Activated CD4-positive, alpha-beta memory T cell treated with anti-CD3 and anti-CD28 coated beads for 36 hours (primary cell): ENCODE measurements at regions of chr4 and their contacts with region 1.

Region 1: DNA sequence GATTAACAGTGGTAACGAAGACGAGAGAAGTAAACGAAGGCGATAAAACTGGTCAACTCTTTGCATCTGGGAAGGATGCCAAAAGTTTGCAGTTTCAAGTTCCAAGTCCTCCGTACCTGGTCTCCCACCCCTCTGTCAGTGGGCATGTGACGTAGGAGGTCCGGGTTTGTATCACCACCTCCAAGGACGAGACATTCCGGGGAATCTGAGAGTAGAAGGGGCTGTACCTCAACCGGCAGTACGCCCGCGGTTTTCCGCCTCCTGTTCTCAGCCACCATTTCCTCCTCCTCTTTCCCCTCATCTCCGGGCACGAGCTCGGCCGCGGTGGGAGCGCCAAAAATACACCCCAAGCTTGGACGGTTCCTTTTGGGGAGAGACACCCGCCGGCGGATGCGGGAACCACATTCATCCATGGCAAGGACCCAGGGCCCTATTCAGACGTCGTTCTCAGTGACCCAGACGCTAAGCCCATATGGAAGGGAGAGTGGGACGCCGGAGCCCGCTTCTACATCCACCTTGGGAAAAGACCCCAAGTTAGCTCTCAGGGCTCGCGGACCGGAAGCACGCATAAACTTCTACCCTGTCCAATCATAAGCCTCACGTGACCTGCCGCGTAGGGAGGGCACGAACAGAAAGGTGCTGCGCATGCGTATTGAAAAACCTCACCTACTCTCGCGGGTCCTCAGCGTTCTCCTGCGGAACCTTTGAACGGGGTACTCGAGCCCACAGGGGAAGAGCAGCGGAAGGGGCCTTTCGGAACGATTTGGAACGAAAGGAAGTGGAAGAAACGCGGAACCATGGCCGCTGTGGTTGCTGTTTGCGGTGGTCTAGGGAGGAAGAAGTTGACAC is at the starts of genes HELQ and MRPS18C:
- DNase-seq: peak; percentile 98
- H3K4me3 Mint-ChIP-seq: peak within 1 kb of the TSS; percentile 100
- H3K27ac Mint-ChIP-seq: peak within 1 kb of the TSS; percentile 100
- H3K4me1 Mint-ChIP-seq: peaks cover 44% of the 10 kb centered on the region
- H3K27me3 Mint-ChIP-seq: peaks cover 2% of the 10 kb centered on the region
- total RNA-seq, gene HELQ: 9.5 to 13.3 TPM
- total RNA-seq, gene MRPS18C: 63.3 to 72.8 TPM

Region 2: DNA sequence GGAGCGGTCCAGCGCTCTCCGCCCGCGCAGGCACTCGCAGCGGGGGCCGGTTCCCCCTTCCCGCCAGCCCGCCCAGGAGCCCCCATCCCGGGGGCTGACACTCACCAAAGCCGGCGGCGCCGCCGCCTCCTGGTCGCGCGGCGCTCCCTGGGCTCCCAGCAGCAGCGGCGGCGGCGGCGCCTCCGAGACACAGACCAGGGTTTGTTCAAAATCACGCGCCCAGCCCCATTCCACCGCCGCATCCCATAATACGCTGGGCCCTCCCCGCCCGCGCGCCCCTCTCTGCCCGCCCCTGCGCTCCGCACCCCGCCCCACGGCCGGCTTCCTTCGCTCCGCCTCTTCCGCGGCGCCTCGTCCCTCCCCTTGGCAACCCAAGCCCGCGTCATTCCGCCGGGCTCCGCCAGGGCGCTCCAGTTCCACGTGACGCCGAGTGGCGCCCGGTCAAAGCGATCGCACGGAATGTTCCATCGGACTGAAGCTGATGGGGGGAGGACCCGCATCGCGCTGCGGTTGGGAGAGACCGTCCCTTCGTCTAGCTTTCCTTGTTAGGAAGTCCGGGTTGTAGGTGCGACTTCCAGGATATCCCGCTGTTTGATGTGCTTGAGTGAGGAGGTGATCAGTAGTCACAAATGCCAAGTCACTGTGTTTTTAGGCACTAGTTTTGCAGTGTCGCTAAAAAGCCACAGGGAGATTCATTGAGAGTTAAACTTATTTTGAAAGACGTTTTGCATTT is 442.7 kb before region 1 on chr4:
- CTCF ChIA-PET with region 1: no interaction called
- POLR2A ChIA-PET with region 1: no interaction called
- intact Hi-C with region 1: loop called (anchors 1 kb)
- DNase-seq: peak; percentile 98
- H3K4me3 Mint-ChIP-seq: peak overlapping the region; percentile 92
- H3K27ac Mint-ChIP-seq: peak overlapping the region; percentile 92
- H3K4me1 Mint-ChIP-seq: peaks cover 36% of the 10 kb centered on the region
- H3K27me3 Mint-ChIP-seq: no peaks in the 10 kb centered on the region

Region 3: DNA sequence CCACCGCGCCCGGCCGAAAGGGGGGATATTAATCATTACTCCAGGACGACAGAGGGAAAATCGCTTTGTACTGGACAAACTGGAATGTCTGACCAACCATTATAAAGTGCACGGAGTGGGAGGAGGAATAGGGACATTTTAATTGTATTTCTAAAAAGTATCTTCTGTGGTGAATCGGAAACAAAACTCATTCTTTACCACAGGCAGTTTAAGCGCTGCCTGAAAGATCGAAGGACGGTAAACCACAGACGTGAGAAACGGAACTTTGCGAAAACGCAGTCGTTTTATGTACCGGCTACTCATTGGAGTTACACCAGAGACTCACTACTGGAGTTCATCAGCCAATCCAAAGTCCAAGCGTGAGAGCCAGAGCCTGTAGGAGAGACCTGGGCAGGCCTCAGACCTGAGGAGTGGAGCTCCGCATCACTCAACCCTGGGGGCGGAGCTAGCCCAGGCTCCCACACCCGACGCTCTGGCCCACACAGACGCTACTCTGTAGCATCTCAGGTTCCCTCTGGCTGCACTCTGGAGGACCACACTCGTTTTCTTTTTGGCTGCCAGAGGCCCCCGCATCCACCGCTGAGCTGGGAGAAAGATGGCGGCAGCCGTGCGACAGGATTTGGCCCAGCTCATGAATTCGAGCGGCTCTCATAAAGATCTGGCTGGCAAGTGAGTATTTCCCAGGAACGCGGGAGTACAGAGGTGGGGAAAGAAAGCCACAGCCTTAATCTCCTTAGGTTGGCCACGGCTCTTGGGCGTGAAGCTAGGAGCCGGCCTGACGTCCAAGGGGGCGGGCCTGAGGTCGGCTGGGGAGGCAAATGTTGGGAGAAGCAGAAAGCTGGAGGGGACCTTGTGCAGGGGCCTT is 420.6 kb before region 1 on chr4 and contains the start of gene COPS4:
- CTCF ChIA-PET with region 1: interaction called, 3 read pairs
- POLR2A ChIA-PET with region 1: no interaction called
- intact Hi-C with region 1: loop called (anchors 1 kb)
- DNase-seq: peak; percentile 97
- H3K4me3 Mint-ChIP-seq: peak within 1 kb of the TSS; percentile 85
- H3K27ac Mint-ChIP-seq: peak within 1 kb of the TSS; percentile 98
- H3K4me1 Mint-ChIP-seq: peaks cover 28% of the 10 kb centered on the region
- H3K27me3 Mint-ChIP-seq: no peaks in the 10 kb centered on the region
- total RNA-seq, gene COPS4: 38.5 to 40.6 TPM

Region 4: DNA sequence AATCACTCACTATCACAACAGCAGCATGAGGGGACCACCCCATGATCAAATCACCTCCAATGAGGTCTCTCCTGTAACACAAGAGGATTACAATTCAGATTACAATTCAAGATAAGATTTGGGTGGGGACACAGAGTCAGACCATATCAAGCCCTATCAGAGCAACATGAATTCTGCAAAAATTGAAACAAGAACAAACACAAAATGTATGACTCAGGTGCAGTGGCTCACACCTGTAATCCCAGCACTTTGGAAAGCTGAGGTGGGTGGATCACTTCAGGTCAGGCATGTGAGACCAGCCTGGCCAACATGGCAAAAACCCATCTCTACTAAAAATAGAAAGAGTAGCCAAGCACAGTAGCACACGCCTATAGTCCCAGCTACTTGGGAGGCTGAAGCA is 107.4 kb before region 1 on chr4:
- CTCF ChIA-PET with region 1: no interaction called
- POLR2A ChIA-PET with region 1: no interaction called
- intact Hi-C with region 1: loop called (anchors 1 kb)
- DNase-seq: no peak
- H3K4me3 Mint-ChIP-seq: no peak overlapping the region
- H3K27ac Mint-ChIP-seq: no peak overlapping the region
- H3K4me1 Mint-ChIP-seq: peaks cover 25% of the 10 kb centered on the region
- H3K27me3 Mint-ChIP-seq: peaks cover 6% of the 10 kb centered on the region

Region 5: GRCh38 chr4:83356899-83357661 is 98.4 kb before region 1 on chr4:
- CTCF ChIA-PET with region 1: interaction called, 6 read pairs
- POLR2A ChIA-PET with region 1: interaction called, 14 read pairs
- intact Hi-C with region 1: loop called (anchors 1 kb)
- DNase-seq: peak; percentile 65
- H3K4me3 Mint-ChIP-seq: peak overlapping the region; percentile 41
- H3K27ac Mint-ChIP-seq: peak overlapping the region; percentile 86
- H3K4me1 Mint-ChIP-seq: peaks cover 17% of the 10 kb centered on the region
- H3K27me3 Mint-ChIP-seq: no peaks in the 10 kb centered on the region

Region 6: GRCh38 chr4:83484500-83485461 is 29.3 kb after region 1 on chr4 and contains the start of gene ABRAXAS1:
- CTCF ChIA-PET with region 1: no interaction called
- POLR2A ChIA-PET with region 1: interaction called, 3 read pairs
- intact Hi-C with region 1: loop called (anchors 1 kb)
- DNase-seq: peak; percentile 95
- H3K4me3 Mint-ChIP-seq: peak within 1 kb of the TSS; percentile 91
- H3K27ac Mint-ChIP-seq: peak within 1 kb of the TSS; percentile 94
- H3K4me1 Mint-ChIP-seq: peaks cover 14% of the 10 kb centered on the region
- H3K27me3 Mint-ChIP-seq: no peaks in the 10 kb centered on the region
- total RNA-seq, gene ABRAXAS1: 17.5 to 18.0 TPM